Breast epithelium (tissue), 4 donors: ENCODE measurements at regions of chr2 and their contacts with region 1.

Region 1: DNA sequence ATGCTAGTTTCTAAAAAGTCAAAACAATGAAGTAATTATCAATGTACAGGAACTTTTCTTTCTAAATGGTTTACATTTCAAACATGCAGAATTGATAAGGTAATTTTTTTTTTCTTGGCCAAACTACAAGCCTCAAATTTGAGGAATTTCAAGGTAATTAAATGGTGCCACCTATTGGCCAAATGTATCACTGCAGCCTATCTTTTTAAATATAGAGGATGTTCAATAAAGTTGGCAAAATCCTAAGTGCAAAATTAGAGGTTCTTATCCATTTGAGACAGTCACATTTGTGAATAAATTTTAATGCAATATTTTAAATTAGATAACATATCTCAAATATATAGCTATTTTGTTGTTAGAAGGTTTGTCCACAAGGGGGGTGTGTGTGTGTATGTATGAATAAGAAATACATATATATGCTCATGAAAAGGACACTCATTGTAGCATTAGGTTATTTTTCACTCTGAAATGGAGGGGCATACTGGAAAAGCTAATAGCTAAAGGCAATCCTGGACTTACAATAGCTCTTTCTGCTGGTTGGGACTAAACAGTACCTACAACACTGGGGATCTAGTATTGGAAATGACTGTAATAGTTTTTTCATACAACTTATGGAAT is 26.2 kb downstream of the MMADHC start:
- DNase-seq: no peak
- H3K4me3 ChIP-seq: no peak overlapping the region
- H3K27ac ChIP-seq: no peak overlapping the region
- H3K4me1 ChIP-seq: no peaks in the 10 kb centered on the region
- H3K27me3 ChIP-seq: no peaks in the 10 kb centered on the region
- CTCF ChIP-seq: peak; percentile 84 to 89 (median 87)
- POLR2A ChIP-seq: no peak

Region 2: DNA sequence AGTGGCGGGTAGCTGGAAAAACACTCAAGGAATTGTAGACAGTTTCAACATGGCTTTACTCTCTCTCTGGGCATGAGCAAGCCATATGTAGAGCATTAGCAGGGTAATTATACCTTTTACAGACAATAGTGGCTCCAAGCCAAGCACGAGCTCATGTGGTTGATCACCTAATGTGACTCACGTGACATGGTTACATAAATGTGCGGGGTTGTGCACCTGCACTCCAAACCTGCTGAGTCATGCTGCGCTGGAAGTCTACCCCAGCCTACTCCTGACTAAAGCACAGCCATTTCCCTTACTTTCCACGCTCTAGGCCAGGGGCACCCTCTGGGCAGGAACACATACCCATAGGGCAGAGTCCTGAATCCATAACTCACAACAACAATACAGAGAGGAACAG is 1307.7 kb before region 1 on chr2:
- intact Hi-C with region 1: no loop called
- DNase-seq: no peak
- H3K4me3 ChIP-seq: no peak overlapping the region
- H3K27ac ChIP-seq: no peak overlapping the region
- H3K4me1 ChIP-seq: no peaks in the 10 kb centered on the region
- H3K27me3 ChIP-seq: no peaks in the 10 kb centered on the region
- CTCF ChIP-seq: no peak
- POLR2A ChIP-seq: no peak

Region 3: DNA sequence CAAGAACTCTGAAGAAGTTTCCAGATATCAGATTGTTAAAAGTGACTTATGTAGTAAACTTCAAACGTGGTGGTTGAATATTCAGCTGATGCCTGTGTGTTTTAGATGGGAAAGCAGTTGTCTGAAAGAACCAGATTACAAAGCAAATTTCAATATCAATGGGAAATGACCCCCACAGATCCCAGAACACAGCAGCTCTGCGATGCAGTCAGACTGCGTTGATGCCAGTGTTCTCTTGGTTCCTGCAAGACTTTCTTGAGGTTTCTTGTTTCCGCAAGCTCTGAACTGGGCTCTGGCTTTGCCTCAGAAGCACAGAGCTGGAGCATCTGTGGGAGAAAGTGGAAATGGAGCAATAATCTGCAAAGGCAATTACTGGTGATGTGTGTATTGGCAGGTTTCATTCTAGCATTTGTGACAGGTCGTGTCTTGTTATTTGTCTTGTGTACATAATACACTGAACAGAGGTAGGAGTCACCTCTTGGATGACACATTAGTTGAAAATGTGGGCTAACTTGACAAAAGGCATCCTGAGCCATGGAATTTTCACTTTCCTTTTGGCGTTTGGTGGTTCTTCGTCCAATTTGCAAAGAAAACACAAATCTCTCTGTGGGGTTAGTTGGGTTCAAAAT is 533.7 kb before region 1 on chr2:
- intact Hi-C with region 1: loop called (anchors 5 kb)
- DNase-seq: no peak
- H3K4me3 ChIP-seq: no peak overlapping the region
- H3K27ac ChIP-seq: no peak overlapping the region
- H3K4me1 ChIP-seq: no peaks in the 10 kb centered on the region
- H3K27me3 ChIP-seq: no peaks in the 10 kb centered on the region
- CTCF ChIP-seq: no peak
- POLR2A ChIP-seq: no peak

Region 4: DNA sequence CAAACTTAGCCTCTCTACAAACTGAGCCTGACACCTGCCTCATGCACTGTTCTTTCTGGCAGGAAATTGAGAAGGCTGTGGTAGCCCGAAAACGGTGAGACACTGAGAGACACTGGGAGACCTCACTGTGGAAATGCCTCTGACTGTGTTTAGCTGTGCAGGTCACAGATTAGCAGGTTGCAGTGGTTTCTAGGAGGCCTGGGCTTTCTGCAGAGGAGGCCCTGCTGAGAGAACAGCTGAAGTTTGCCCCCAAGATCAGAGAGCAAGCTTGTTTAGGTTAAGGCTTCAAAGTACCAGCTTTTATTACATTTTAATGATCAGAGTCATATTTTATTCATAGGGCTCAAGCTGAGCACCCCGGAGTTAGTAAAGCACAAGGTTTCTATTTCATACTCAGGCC is 299.7 kb before region 1 on chr2:
- intact Hi-C with region 1: no loop called
- DNase-seq: no peak
- H3K4me3 ChIP-seq: no peak overlapping the region
- H3K27ac ChIP-seq: no peak overlapping the region
- H3K4me1 ChIP-seq: no peaks in the 10 kb centered on the region
- H3K27me3 ChIP-seq: no peaks in the 10 kb centered on the region
- CTCF ChIP-seq: no peak
- POLR2A ChIP-seq: no peak

Region 5: DNA sequence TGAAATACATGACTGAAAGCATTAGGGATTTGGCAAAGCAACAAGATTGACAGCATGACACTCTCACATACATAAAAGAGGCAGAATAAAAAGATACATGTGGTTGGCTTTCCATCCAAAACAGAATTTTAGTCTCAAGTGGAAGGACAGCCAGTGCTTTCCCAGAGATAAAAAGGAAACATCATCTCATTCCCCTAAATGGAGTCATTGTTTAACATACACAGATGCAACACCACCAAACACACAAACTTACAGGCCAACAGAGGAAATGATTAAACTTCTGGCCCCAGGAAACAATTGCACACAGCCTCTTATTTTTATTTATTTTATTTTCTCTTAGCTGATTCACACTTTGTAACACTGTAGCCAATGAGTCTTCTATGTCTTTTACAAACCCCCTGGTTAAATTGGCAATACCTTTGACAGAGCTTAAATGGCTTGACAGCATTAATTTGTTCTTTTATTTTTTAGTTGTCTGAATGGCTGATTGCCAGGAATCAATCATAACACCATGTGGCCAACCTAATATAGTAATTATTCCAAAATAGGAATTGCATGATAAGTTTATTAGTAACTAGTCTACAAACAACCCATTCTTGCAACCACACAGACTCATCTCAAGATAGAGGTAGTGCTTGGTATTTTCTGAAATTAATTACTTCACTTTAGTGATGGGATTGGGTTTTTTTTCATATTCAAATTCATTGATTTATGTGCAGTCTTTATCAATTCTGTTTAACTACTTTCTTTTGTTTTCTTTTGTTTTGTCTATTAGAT is 735.5 kb after region 1 on chr2:
- intact Hi-C with region 1: no loop called
- DNase-seq: no peak
- H3K4me3 ChIP-seq: no peak overlapping the region
- H3K27ac ChIP-seq: no peak overlapping the region
- H3K4me1 ChIP-seq: no peaks in the 10 kb centered on the region
- H3K27me3 ChIP-seq: no peaks in the 10 kb centered on the region
- CTCF ChIP-seq: no peak
- POLR2A ChIP-seq: no peak